ENCODE measurements at regions of chr2 and their contacts with region 1.

Region 1: DNA sequence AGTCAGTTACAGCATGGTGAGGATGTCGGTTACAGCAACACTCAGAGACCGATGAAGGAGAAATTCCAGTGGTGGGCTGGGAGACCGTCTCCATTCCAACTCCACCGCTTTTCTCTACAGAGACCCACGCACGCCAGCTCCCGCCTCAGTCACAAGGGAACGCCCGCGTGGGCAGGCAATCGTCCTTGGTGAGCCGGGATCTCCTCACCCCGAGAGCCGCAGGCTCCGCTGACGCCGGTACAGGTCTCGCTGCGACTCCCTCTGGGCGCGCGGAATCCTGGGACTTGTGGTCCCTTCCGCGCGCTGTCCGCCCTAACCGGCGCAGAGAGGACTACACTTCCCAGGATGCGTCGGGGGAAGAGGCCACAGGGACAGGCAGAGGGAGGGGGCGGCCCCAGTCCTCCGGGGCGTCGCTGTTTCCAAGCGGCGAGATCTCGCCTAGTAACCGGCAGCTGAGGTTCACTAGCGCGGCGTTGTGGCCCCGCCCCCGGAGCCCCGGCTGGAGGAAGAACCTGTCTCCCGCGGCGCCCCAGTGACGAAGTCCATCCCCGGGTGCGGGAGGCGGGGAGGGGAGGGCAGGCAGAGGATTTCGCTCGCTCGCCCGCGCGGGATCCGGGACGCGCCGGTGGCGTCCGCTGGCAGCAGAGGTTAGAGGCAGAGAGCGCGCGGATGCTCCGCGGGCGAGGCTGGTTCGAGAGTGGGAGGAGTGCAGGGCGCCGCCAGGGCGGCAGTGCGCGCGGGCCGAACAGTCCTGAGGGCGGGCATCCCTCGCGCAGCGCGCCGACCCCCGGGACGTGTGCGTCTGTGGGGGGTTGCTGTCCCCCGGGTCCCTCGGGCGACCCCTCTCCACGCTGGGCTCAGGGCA is at the start of gene EML6:
- DNase-seq: peak; percentile 98
- ATAC-seq: peak; percentile 99
- H3K4me3 ChIP-seq: peak within 1 kb of the TSS; percentile 82
- H3K27ac ChIP-seq: peak within 1 kb of the TSS; percentile 42
- H3K4me1 ChIP-seq: peaks cover 3% of the 10 kb centered on the region; the same call in 1 of the 2 replicates
- H3K27me3 ChIP-seq: peaks cover 32% of the 10 kb centered on the region
- CTCF ChIP-seq: no peak; the same call in 1 of the 2 replicates
- POLR2A ChIP-seq: peak; percentile 62
- RAD21 ChIP-seq: no peak; the same call in 1 of the 2 replicates
- total RNA-seq, gene EML6: 0.18 and 0.28 TPM in 2 replicates

Region 2: GRCh38 chr2:54115284-54116137 is 607.9 kb before region 1 on chr2 and contains the start of gene ACYP2:
- CTCF ChIA-PET with region 1: no interaction called
- POLR2A ChIA-PET with region 1: interaction called, 14 read pairs
- dilution Hi-C with region 1: no loop called
- in situ Hi-C with region 1: no loop called
- intact Hi-C with region 1: no loop called
- DNase-seq: peak; percentile 96
- ATAC-seq: peak; percentile 97
- H3K4me3 ChIP-seq: peak within 1 kb of the TSS; percentile 77
- H3K27ac ChIP-seq: peak within 1 kb of the TSS; percentile 99
- H3K4me1 ChIP-seq: no peaks in the 10 kb centered on the region
- H3K27me3 ChIP-seq: no peaks in the 10 kb centered on the region
- CTCF ChIP-seq: peak; percentile 47
- POLR2A ChIP-seq: peak; percentile 93
- RAD21 ChIP-seq: peak; percentile 51
- total RNA-seq, gene ACYP2: 3.9 and 5.8 TPM in 2 replicates

Region 3: DNA sequence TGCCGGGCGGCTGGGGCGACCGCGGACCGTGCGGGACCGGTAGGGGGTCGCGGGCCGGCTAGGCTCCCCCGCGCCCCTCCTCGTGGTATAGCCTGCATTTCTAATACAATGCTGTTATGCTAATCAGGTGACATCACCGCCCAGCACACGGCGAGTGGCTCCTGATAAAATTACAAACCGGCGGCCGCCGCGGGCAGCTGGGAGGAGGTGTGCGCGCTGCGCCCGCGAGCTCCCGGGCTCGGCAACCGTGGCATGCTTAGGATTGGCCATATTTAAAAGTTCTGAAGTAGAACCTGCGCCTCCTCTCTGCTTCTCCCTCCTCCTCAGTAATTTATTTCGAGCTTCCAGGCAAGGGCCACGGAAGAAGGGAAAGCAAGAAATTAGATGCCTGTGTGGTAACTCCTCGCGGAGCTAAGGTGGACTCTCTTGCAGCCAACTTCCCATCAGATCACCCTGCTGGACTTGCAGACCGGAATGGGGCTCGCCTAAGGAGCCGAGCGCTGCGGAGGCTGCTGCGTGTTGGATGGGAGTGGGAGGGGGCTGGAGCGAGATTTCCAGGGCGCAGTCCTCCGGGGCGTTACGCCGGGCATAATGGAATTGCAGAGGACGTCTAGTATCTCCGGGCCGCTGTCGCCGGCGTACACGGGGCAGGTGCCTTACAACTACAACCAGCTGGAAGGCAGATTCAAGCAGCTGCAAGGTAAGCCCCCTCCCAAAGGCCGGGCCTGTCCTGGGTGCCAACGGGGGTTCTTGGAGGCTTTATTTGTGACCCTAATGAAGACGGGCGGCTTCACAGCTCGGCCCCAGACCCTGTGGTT is 165.0 kb before region 1 on chr2:
- CTCF ChIA-PET with region 1: no interaction called
- POLR2A ChIA-PET with region 1: no interaction called
- dilution Hi-C with region 1: no loop called
- in situ Hi-C with region 1: no loop called
- intact Hi-C with region 1: no loop called
- DNase-seq: peak; percentile 64
- ATAC-seq: peak; percentile 47
- H3K4me3 ChIP-seq: peak overlapping the region; percentile 54
- H3K27ac ChIP-seq: peak overlapping the region; percentile 3; the same call in 1 of the 2 replicates
- H3K4me1 ChIP-seq: peaks cover 21% of the 10 kb centered on the region
- H3K27me3 ChIP-seq: no peaks in the 10 kb centered on the region
- CTCF ChIP-seq: no peak
- POLR2A ChIP-seq: no peak
- RAD21 ChIP-seq: no peak

Region 4: DNA sequence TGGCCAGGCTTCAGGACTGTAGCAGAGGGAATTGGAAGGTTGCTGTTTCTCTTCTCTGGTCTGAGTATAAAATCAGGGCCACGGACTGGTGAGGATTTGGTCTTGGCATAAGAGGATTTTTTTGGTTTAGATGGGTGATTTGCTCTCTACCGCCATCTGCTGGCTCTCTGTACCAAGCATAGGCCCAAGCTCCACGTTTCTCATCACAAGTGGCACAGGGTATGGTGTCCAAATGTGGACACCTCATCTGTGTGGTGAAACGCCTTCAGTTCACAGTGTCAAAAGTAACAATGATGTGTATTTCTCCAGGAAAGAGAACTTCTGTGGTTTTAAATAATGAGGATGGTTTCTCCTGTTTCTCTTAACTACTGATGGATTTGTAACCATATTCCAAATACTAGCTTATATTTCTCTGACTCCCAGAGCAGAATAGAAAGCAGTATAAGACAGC is 115.2 kb after region 1 on chr2:
- CTCF ChIA-PET with region 1: interaction called, 6 read pairs
- POLR2A ChIA-PET with region 1: no interaction called
- dilution Hi-C with region 1: no loop called
- in situ Hi-C with region 1: no loop called
- intact Hi-C with region 1: loop called (anchors 2 kb)
- DNase-seq: peak; percentile 68
- ATAC-seq: peak; percentile 95
- H3K4me3 ChIP-seq: no peak overlapping the region
- H3K27ac ChIP-seq: no peak overlapping the region
- H3K4me1 ChIP-seq: no peaks in the 10 kb centered on the region; the same call in 1 of the 2 replicates
- H3K27me3 ChIP-seq: peaks cover 18% of the 10 kb centered on the region
- CTCF ChIP-seq: peak; percentile 80
- POLR2A ChIP-seq: no peak
- RAD21 ChIP-seq: peak; percentile 67

Region 5: DNA sequence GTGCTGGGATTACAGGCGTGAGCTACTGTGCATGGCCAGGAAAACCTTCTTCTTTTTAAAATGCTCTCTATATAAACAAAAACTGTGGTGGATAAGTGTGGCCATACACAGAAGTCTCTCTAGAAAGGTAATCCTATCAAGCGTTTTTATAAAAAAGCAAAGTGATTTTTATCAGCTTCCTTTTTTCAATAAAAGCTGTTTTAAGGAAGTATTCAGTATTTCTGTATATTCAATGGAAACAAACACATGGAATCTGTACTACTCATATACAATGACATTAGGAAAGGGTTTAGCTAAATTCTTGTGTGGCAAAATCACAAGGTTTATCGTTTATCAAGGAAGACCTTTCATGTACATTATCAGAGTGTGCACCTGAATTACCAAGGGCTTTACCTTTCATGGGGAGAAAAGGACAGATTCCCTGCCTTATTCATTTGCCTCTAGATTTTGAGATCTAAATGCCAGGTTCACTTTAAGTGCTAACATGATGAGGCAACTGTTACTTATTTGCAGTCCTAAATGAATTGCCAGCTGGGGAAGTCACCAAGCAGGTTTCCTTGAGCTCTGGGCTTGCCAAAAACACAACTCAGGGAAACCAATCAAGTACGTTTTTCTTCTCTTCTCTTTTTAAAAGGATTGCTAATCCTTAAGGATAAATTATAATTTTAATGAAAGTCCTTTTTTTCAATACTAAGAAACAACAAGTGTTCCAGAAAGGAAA is 256.1 kb after region 1 on chr2:
- CTCF ChIA-PET with region 1: no interaction called
- POLR2A ChIA-PET with region 1: no interaction called
- dilution Hi-C with region 1: no loop called
- in situ Hi-C with region 1: no loop called
- intact Hi-C with region 1: loop called (anchors 10 kb)
- DNase-seq: no peak
- ATAC-seq: no peak
- H3K4me3 ChIP-seq: no peak overlapping the region
- H3K27ac ChIP-seq: no peak overlapping the region; the same call in 1 of the 2 replicates
- H3K4me1 ChIP-seq: peaks cover 16% of the 10 kb centered on the region
- H3K27me3 ChIP-seq: no peaks in the 10 kb centered on the region
- CTCF ChIP-seq: no peak
- POLR2A ChIP-seq: no peak
- RAD21 ChIP-seq: no peak

Region 6: DNA sequence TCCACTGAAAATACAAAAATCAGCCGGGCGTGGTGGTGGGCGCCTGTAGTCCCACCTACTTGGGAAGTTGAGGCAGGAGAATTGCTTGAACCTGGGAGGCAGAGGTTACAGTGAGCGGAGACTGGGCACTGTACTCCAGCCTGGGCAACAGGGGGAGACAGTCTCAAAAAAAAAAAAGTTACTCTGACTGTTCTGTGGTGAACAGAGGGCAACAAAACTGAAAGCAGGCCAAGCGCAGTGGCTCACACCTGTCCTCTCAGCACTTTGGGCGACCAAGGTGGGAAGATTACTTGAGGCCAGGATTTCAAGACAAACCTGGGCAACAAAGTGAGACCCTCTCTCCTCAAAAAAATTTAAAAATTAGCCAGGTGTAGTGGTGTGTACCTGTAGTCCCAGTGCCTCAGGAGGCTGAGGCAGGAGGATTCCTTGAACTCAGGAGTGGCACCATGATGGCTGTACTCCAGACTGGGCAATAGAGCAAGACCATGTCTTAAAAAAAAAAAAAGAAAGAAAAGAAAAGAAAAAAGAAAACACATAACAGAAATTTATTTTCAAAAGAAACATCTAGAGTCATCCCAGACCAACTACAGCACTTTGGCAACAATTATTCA is 340.5 kb after region 1 on chr2:
- CTCF ChIA-PET with region 1: no interaction called
- POLR2A ChIA-PET with region 1: no interaction called
- dilution Hi-C with region 1: no loop called
- in situ Hi-C with region 1: no loop called
- intact Hi-C with region 1: no loop called
- DNase-seq: no peak
- ATAC-seq: no peak
- H3K4me3 ChIP-seq: no peak overlapping the region
- H3K27ac ChIP-seq: no peak overlapping the region
- H3K4me1 ChIP-seq: no peaks in the 10 kb centered on the region
- H3K27me3 ChIP-seq: no peaks in the 10 kb centered on the region
- CTCF ChIP-seq: 0 out of 2 replicates have a peak, but pooled peaks have one; percentile 13
- POLR2A ChIP-seq: no peak
- RAD21 ChIP-seq: no peak